WTC11 (cell line): ENCODE measurements at regions of chr22 and their contacts with region 1.

Region 1: GRCh38 chr22:39332441-39333064 is 13.1 kb upstream of the RPL3 start:
- DNase-seq: no peak
- ATAC-seq: no peak
- H3K4me3 Mint-ChIP-seq: no peak overlapping the region
- H3K27ac Mint-ChIP-seq: no peak overlapping the region
- H3K4me1 Mint-ChIP-seq: no peaks in the 10 kb centered on the region
- H3K27me3 Mint-ChIP-seq: no peaks in the 10 kb centered on the region; the same call in 1 of the 2 replicates
- CTCF ChIP-seq: no peak

Region 2: DNA sequence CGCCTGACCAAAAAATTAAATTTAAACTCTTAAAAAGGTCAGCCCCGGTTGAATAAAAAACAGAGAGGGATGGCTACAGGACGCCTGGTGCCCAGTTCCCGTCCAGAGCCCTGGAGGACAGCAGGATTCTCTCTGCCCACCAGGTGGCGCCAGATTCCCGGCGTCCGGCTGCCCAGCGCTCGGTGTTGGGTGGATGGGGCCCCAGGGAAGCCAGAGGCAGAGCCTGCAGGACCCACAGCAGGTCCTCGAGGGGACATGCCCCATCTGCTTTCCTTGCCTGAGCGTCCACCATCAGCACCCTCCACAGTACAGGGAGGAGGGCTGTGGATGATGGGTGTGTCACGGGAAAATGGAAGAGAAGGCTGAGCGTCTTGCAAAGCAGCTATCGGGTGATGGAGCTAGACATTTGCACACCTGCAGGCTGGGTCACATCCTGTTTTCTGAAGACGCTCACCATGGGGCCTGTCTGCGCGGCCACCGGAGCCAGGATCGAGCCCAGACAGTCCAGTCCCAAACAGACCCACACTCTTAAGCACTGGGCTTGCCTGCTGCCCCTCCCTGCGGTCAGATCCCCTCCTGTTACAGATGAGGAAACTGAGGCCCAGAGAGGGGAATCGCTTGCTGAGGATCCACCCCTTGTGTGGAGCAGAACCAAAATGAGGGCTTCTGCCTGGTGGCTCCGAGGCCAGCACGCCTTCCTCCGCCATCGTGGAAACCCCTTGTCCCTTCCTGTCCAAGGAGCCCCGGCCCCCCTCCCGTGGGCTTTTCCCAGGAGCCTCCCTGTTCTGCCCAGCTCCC is 161.5 kb before region 1 on chr22:
- CTCF ChIA-PET with region 1: interaction called, 11 read pairs
- POLR2A ChIA-PET with region 1: no interaction called
- DNase-seq: peak; percentile 91
- ATAC-seq: peak; percentile 43
- H3K4me3 Mint-ChIP-seq: no peak overlapping the region
- H3K27ac Mint-ChIP-seq: peak overlapping the region; percentile 92
- H3K4me1 Mint-ChIP-seq: peaks cover 63% of the 10 kb centered on the region
- H3K27me3 Mint-ChIP-seq: no peaks in the 10 kb centered on the region
- CTCF ChIP-seq: peak; percentile 97

Region 3: GRCh38 chr22:39343259-39344048 is 10.9 kb after region 1 on chr22:
- CTCF ChIA-PET with region 1: interaction called, 64 read pairs
- POLR2A ChIA-PET with region 1: interaction called, 3 read pairs
- DNase-seq: peak; percentile 77
- ATAC-seq: peak; percentile 95
- H3K4me3 Mint-ChIP-seq: no peak overlapping the region
- H3K27ac Mint-ChIP-seq: no peak overlapping the region
- H3K4me1 Mint-ChIP-seq: peaks cover 18% of the 10 kb centered on the region
- H3K27me3 Mint-ChIP-seq: peaks cover 3% of the 10 kb centered on the region
- CTCF ChIP-seq: 0 out of 2 replicates have a peak, but pooled peaks have one; percentile 11

Region 4: GRCh38 chr22:39359659-39360195 is 27.2 kb after region 1 on chr22:
- CTCF ChIA-PET with region 1: interaction called, 12 read pairs
- POLR2A ChIA-PET with region 1: no interaction called
- DNase-seq: no peak
- ATAC-seq: no peak
- H3K4me3 Mint-ChIP-seq: no peak overlapping the region
- H3K27ac Mint-ChIP-seq: peak overlapping the region; percentile 3; the same call in 1 of the 2 replicates
- H3K4me1 Mint-ChIP-seq: peaks cover 48% of the 10 kb centered on the region
- H3K27me3 Mint-ChIP-seq: no peaks in the 10 kb centered on the region
- CTCF ChIP-seq: no peak

Region 5: DNA sequence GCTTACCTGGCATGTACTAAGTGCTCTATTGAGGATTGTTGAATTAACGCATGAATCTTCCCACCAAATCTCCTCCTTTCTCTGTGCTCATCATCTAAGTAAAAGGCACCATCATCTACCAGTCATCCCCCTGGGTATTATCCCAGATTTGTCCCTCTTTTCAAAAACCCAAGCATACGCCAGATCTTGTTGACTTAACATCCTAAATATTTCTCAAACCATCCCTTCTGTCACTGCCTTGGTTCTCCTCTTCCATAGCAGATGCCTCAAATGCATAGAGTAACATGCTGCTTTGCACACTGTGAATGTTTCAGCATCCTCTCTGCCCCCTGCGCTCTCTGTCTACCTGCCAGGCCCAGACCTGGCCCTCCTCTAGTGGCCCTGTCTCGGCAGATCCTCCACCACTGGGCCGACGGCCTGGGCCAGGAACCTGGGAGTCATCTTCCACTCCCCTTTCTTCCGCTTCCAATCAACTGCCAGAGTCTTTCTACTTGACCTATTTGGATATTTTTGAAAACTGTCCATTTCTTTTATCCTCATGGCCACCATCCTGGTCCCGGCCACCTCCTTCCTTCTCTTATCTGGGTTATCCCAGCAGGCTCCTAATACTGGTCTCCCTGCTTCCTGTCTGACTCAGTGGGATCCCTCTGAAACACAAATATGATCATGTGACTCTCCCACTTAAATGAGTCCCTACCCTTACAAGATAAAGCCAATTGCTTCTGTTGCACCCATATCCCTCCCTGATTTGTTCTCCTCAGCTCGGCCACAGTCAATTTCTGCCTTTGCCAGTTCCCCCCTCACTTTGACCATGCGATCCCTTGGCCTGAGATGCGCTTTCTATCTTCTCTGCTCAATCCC is 63.6 kb after region 1 on chr22:
- CTCF ChIA-PET with region 1: interaction called, 14 read pairs
- POLR2A ChIA-PET with region 1: no interaction called
- DNase-seq: no peak
- ATAC-seq: no peak
- H3K4me3 Mint-ChIP-seq: no peak overlapping the region
- H3K27ac Mint-ChIP-seq: no peak overlapping the region
- H3K4me1 Mint-ChIP-seq: peaks cover 7% of the 10 kb centered on the region
- H3K27me3 Mint-ChIP-seq: peaks cover 2% of the 10 kb centered on the region; the same call in 1 of the 2 replicates
- CTCF ChIP-seq: no peak